ENCODE measurements at regions of chr22 and their contacts with region 1.

Region 1: DNA sequence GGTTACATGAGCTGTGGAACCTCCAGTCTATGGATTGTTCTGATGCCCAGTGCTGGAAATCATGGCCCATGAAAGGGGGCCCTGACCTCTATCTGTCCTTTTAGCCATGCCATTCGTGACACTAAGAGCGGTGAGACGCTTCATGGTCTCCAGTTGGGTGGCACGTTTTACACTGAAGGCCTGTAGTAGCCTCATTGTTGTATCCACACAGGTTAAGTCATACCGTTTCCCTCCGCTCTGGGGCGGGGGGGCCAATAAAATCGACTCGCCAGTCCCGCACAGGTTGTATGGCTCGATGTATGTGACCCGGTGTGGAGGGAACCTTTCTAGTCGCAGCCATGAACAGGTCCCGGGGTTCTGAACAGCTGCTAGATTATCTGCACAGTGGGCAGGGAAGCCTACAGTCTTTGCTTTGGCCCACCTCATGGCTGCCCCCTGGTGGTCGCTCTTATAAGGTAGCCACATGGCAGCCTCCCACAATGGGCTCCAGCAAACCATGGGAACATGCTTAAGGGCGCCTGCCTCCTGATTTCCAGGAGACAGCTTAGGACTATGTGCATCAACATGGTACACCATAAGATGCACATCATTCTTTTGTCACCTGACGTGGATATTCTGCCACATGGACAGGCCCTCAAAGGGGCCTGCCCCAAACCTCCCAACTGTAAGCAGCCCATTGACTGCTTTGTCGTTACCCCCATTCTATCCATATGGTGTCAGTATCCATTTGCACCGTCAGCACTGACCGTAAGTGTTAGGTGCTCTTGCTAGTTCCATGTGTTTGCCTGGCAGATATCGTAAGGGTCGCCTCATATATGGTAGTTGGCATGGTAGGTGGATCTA is 19.7 kb upstream of the APOL3 start:
- DNase-seq: peak; percentile 87
- CTCF ChIP-seq: peak; percentile 85

Region 2: DNA sequence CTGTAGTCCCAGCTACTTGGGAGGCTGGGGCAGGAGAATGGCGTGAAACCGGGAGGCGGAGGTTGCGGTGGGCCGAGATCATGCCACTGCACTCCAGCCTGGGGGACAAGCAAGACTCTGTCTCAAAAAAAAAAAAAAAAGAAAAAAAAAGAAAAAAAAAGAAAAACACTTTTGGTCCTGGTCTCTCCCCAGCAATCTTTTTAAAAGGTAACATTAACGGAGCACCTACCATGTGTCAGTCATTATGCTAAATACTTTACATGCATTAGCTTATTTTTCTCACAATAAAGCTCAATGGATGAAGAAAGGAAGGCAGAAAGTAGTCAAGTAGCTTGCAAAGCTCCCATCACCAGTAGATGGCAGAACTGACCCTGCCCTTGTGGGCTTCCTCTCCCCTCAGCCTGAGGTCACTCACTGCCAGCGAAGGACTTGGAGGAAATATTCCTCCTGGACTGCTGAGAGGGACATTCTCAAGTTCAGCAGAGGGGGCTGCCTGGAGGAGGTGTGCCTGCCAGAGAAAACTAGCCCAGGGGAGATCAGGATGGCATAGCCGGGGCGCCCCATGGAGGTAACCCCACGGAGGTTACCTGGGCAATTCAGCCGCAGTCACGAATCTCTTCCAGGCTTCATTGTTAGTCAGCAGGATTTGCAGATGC is 35.2 kb before region 1 on chr22:
- CTCF ChIA-PET with region 1: interaction called, 88 read pairs
- POLR2A ChIA-PET with region 1: no interaction called
- DNase-seq: no peak
- CTCF ChIP-seq: peak; percentile 58

Region 3: GRCh38 chr22:36151006-36151595 is 29.2 kb before region 1 on chr22:
- CTCF ChIA-PET with region 1: interaction called, 88 read pairs
- POLR2A ChIA-PET with region 1: no interaction called
- DNase-seq: no peak
- CTCF ChIP-seq: no peak

Region 4: DNA sequence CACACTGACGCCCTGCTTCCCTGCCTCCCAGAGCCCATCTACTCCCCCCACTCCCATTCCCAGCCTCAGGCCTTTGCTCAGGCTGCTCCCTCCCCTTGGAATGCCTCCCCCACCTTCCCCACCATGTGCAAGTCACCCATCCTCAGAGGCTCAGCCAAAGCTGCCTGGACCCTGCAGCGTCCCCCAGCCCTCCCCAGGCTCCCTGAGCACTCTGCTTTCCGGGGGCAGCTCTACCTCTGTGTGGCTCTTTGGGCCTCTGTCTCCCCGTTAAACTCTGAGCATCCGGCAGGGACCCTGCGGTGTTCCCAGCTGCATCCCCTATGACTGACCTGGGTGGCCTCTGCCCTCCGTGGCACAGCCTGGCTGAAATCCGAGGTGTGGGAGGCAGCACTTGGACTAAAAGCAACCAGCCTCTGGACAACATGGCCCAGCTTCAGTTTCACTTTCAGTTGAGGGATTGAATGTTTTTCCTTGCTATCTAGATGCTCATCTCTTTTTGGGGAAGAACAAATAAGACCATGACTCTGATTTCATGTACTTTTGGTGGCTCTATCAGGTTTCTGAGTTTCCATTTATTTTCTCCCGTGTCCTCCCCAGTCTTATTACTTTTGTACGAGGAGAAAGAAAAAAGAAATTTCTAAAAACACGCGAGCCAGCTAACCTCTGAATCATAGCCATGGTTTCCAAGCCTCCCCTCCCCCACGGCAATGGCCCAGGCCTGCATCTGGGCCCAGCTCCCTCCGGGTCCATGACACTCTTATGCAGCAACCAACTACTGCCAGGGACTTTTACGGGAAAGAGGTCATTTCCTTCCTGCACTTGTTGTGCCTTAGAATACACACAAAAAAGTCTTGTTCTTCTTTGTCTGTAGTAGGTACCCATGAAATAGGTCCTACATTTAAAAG is 23.5 kb before region 1 on chr22:
- CTCF ChIA-PET with region 1: interaction called, 88 read pairs
- POLR2A ChIA-PET with region 1: no interaction called
- DNase-seq: no peak
- CTCF ChIP-seq: no peak

Region 5: DNA sequence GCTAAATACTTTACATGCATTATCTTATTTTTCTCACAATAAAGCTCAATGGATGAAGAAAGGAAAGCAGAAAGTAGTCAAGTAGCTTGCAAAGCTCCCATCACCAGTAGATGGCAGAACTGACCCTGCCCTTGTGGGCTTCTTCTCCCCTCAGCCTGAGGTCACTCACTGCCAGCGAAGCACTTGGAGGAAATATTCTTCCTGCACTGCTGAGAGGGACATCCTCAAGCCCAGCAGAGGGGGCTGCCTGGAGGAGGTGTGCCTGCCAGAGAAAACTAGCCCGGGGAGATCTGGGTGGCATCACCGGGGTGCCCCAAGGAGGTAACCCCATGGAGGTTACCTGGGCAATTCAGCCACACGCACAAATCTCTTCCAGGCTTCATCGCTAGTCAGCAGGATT is 14.7 kb after region 1 on chr22:
- CTCF ChIA-PET with region 1: interaction called, 21 read pairs
- POLR2A ChIA-PET with region 1: no interaction called
- DNase-seq: peak; percentile 45
- CTCF ChIP-seq: peak; percentile 66

Region 6: DNA sequence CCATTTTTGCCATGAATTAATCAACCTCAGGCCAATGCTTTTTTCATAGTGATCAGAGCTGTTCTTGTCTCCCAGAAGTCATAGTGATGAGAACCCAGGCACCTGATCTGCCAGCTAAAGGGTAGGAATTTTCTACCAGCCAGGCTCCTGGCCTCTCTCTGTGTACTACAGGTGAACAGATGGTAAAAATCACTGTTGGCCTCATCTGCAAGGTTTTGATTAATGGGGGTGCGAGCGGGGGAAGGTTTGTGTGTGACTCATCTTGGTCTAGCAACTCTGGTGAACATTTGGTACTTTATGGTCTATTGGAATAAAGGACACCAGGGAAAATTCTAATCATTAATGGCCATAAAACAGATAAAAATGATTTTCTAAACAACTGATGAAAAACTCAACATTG is 35.7 kb after region 1 on chr22:
- CTCF ChIA-PET with region 1: interaction called, 11 read pairs
- POLR2A ChIA-PET with region 1: no interaction called
- DNase-seq: no peak
- CTCF ChIP-seq: no peak

Region 7: GRCh38 chr22:36285017-36285416 is 104.8 kb after region 1 on chr22:
- CTCF ChIA-PET with region 1: no interaction called
- POLR2A ChIA-PET with region 1: no interaction called
- DNase-seq: no peak
- CTCF ChIP-seq: no peak

Measured in GM10248 (cell line).